MCF 10A (cell line): ENCODE measurements at regions of chr17 and their contacts with region 1.

Region 1: DNA sequence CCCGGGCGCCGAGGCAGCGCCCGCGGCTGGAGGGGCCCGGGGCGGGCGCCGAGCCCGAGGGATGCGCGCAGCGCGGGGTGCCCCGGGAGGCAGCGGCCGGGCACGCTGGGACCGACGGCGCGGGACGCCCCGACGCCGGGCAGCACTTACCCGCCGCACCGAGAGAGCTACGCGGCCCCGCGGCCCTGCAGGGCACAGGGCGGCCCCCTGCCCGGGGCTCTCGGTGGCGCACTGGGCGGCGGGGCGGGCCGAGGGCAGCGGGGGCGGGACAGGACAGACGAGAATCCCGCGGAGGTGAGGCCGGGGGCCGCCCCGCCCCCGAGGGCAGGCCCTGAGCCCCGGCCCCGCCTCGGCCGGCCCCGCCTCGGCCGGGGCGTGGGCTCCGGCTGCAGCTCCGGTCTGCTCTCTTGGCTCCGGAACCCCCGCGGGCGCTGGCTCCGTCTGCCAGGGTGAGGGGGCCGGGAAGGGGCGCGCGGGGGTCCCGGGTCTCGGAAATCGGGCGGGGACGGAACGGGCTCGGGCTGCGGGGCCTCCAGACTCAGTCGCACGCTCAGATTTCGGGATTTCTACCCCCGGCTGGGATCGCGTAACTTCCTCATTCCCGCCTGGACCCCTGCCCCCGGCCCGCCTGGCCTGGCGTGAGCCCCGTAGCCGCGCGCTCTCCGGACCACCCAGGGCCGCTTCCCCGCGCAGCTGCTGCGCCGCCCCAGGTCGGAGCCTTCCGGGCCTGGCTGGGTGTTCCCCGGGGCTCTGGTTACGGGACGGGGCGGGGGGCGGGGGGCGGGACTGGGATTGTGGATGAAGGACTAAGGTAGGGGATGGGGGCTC is at the start of gene PLD2:
- DNase-seq: peak; percentile 83
- H3K4me3 Mint-ChIP-seq: peak within 1 kb of the TSS; percentile 77
- H3K27ac Mint-ChIP-seq: no peak within 1 kb of the TSS
- H3K4me1 Mint-ChIP-seq: peaks cover 17% of the 10 kb centered on the region
- H3K27me3 Mint-ChIP-seq: no peaks in the 10 kb centered on the region
- CTCF ChIP-seq: no peak
- total RNA-seq, gene PLD2: 27.6 and 31.7 TPM in 2 replicates

Region 2: GRCh38 chr17:4721203-4722135 is 85.5 kb before region 1 on chr17:
- CTCF ChIA-PET with region 1: no interaction called
- POLR2A ChIA-PET with region 1: no interaction called
- intact Hi-C with region 1: no loop called
- DNase-seq: peak; percentile 19
- H3K4me3 Mint-ChIP-seq: no peak overlapping the region
- H3K27ac Mint-ChIP-seq: peak overlapping the region; percentile 49
- H3K4me1 Mint-ChIP-seq: peaks cover 14% of the 10 kb centered on the region
- H3K27me3 Mint-ChIP-seq: no peaks in the 10 kb centered on the region
- CTCF ChIP-seq: no peak

Region 3: GRCh38 chr17:4796553-4796921 is 10.5 kb before region 1 on chr17:
- CTCF ChIA-PET with region 1: interaction called, 3 read pairs
- POLR2A ChIA-PET with region 1: interaction called, 41 read pairs
- intact Hi-C with region 1: loop called (anchors 1 kb)
- DNase-seq: peak; percentile 20
- H3K4me3 Mint-ChIP-seq: peak overlapping the region; percentile 96
- H3K27ac Mint-ChIP-seq: peak overlapping the region; percentile 88
- H3K4me1 Mint-ChIP-seq: peaks cover 4% of the 10 kb centered on the region
- H3K27me3 Mint-ChIP-seq: no peaks in the 10 kb centered on the region
- CTCF ChIP-seq: no peak

Region 4: DNA sequence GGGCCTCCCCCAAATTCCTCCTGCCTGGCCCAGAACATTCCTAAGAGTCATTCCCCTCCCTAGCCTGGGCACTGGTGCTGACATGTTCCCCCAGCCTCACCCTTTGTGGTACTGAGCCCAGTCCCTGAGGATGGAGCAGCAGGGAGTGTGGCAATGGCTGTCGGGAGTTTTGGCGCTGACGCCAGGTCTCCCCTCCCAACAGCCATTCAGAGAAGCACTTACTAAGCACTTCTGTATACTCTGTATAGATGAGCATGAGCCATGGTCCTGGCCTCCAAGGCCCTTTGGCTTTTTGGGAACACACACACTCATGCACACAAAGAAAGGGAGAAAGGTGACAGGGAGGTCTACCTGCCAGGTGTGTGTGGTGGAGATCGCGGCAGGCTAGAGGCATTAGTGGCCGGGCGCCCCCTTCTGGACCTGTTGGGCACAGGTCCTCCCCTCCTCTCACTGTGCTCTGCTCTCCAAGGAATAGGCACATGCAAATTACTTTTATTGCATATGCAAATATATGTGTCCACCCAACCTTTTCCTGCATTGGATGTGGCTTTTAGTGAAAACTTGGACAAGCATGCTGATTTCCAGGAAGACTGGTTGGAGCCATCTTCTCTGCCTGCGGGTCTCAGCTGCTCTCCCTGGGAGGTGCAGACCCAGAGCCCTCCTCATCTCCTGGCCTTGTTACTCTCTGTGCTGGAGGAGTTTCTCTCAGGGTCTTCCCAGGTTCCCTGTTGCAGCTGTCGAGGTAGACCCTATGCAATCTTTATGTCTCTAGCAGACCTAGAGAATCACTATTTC is 75.0 kb after region 1 on chr17:
- CTCF ChIA-PET with region 1: interaction called, 6 read pairs
- POLR2A ChIA-PET with region 1: interaction called, 4 read pairs
- intact Hi-C with region 1: loop called (anchors 5 kb)
- DNase-seq: peak; percentile 78
- H3K4me3 Mint-ChIP-seq: no peak overlapping the region
- H3K27ac Mint-ChIP-seq: no peak overlapping the region
- H3K4me1 Mint-ChIP-seq: peaks cover 6% of the 10 kb centered on the region
- H3K27me3 Mint-ChIP-seq: no peaks in the 10 kb centered on the region
- CTCF ChIP-seq: peak; percentile 80